A673 (cell line): ENCODE measurements at regions of chr18 and their contacts with region 1.

Region 1: DNA sequence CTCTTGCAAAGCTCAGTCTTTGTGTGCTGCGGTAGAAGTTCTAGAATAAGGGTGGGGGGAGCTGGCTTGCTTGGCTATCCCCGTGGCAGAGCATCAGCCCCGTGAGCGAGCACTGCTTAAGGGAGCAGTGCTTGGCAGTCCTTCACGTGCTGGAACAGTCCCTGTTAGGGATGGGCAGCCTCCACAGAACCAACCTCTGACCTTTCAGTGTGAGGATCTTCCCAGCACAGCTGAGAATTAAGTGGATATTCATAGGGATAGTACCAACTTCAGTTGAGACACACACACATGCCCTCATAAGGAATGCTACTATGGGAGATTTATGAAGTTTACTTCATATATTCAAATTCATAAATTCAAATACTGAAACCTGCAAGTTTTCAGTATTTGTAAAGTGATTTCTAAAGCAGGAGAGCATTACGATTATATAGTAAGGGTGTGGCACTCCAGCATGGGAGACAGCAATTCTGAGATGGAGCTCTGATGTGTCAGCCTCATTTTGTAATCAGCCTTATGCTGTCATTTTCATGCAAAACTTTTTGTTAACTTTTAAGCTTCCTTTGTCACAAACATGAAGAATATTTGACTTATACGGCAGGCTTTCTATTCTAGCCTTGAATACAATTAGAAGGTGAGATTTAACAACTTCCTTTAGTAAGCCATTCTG is 39.5 kb downstream of the ATP9B start:
- DNase-seq: no peak
- H3K4me3 ChIP-seq: no peak overlapping the region
- H3K27ac ChIP-seq: no peak overlapping the region
- H3K4me1 ChIP-seq: no peaks in the 10 kb centered on the region
- H3K27me3 ChIP-seq: no peaks in the 10 kb centered on the region
- CTCF ChIP-seq: no peak

Region 2: DNA sequence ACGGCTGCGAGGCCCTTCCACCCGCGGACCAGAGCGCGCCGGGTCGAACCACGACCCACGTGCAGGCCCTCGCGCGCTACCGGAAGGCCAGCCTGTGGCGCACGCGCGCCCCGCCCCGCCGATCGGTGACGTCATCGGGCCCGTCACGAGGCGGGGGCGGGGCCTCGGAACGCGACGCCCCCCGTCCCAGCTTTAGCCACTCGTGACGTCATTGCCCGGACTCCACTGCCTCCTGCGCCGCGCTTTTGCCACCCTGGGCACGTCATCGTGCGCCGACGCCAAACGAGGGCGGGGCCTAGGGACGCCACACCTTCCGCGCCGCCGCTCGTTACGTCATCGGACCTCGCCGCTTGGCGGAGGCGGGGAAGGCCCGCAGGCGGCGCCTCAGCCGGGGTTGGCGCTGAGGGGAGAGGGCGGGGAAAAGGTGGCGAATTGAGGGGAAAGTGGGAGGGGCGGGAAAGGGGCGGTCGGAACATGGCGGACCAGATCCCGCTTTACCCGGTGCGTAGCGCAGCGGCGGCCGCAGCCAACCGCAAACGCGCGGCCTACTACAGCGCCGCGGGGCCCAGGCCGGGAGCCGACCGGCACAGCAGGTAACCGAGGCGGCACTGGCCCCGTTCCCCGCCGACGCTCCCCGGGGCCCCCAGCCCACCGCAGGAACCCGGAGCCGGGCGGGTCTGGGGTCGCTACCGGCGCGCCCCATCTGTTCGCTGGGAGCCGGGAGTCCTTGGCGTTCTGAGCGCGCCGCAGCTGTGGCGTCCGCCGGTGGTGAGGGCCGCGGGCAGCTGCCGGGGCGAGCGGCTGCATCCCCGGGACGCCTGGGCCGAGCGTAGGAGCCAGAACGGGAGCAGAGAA is 39.5 kb before region 1 on chr18 and contains the start of gene ATP9B:
- CTCF ChIA-PET with region 1: no interaction called
- POLR2A ChIA-PET with region 1: no interaction called
- intact Hi-C with region 1: no loop called
- DNase-seq: peak; percentile 96
- H3K4me3 ChIP-seq: peak within 1 kb of the TSS; percentile 81
- H3K27ac ChIP-seq: peak within 1 kb of the TSS; percentile 87
- H3K4me1 ChIP-seq: no peaks in the 10 kb centered on the region
- H3K27me3 ChIP-seq: no peaks in the 10 kb centered on the region
- CTCF ChIP-seq: no peak
- total RNA-seq, gene ATP9B: 17.9 and 22.3 TPM in 2 replicates

Region 3: DNA sequence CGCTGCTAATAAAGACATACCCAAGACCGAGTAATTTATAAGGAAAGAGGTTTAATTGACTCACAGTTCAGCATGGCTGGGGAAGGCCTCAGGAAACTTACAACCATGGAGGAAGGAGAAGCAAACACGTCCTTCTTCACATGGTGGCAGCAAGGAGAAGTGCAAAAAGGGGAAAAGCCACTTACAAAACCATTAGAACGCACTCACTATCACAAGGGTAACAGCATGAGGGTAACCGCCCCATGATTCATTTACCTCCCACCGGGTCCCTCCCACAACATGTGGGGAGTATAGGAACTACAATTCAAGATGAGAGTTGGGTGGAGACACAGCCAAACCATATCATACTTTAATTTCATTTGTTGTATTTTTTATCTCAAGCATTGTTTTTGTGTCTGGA is 28.1 kb after region 1 on chr18:
- CTCF ChIA-PET with region 1: no interaction called
- POLR2A ChIA-PET with region 1: no interaction called
- intact Hi-C with region 1: loop called (anchors 2 kb)
- DNase-seq: peak; percentile 34
- H3K4me3 ChIP-seq: no peak overlapping the region
- H3K27ac ChIP-seq: no peak overlapping the region
- H3K4me1 ChIP-seq: no peaks in the 10 kb centered on the region
- H3K27me3 ChIP-seq: no peaks in the 10 kb centered on the region
- CTCF ChIP-seq: no peak

Region 4: DNA sequence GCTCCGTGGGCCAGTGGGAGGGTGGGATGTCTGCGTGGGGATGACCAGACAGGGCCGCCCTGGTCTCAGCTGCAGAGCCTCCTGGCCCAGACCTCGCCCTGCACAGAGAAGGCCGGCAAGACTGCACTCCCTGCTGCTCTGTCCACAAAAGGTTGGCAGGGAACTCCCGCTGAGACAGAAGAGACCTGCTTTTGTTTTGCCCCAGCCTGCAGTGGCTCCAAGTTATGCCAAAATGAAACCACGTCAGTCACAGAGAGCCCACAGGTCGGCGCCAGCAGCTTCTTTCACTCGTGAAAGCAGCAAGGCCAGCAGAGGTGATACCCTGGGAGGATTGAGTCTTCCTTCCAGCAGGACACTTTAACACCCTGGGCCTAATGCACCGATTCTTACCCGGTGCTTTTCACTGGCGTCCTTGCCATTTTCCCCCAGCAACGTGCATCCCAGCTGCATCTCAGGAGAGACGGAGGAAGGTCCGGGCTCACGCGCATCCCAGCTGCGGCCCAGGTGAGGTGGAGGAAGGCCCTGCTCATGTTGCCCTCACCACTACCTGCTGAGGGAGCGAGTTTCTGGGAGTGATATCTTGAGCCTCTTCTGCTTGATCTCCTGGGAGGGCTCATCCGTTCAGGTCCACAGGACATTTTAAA is 548.8 kb after region 1 on chr18:
- CTCF ChIA-PET with region 1: no interaction called
- POLR2A ChIA-PET with region 1: no interaction called
- intact Hi-C with region 1: no loop called
- DNase-seq: no peak
- H3K4me3 ChIP-seq: no peak overlapping the region
- H3K27ac ChIP-seq: no peak overlapping the region
- H3K4me1 ChIP-seq: no peaks in the 10 kb centered on the region
- H3K27me3 ChIP-seq: peaks cover 46% of the 10 kb centered on the region
- CTCF ChIP-seq: no peak